Adrenal gland (tissue), 19 donors: ENCODE measurements at regions of chr16 and their contacts with region 1.

Region 1: DNA sequence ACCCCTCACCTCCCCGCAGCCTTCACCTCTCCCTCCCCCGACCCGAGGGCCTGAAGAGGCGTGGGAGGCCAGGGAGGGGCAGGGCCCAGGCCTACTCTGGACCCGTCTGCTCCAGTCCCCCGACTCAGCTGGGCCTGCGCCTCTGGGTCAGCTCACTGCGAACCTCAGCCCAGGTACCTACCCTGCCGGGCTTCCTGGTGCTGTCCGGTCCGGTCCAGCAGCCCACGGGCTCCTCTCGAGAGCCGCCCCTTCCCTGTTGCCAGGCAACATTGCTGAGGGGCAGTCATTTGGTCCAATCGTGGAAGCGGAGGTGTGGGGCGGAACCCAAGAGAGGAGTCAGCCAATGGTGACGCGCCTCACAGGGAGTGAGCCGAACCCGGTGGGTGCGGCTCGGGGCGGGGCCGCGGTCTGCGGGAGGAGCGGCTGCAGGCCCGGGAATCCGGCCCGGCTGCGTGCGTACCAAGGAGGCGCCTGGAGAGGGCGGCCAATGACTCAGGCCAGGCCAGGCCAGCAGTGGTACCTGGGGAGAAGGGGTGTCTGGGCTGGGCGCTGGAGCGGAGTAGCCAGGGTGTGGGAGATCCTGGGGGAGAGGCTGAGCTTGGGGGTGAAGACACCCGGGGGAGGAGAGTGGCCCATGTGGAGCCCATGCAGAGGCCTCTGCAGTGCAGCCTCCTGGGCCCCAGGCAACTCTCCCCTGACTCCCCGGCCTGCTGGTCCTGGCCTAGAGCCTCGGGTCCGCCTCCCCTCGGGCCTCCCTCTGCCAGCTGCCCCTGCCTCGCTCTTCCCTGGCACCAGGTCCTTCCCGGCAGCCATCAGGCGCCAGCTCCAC is at the start of gene MEAK7:
- DNase-seq: peak; percentile 98 to 99 (median 99)
- H3K4me3 ChIP-seq: peak within 1 kb of the TSS; percentile 38 to 82 (median 63)
- H3K27ac ChIP-seq: peak within 1 kb of the TSS in 4 of 5 donors; percentile 44 to 91 (median 68)
- H3K4me1 ChIP-seq: peaks cover 7 to 16% of the 10 kb centered on the region in 2 donors
- H3K27me3 ChIP-seq: no peaks in the 10 kb centered on the region
- CTCF ChIP-seq: peak in 2 of 6 experiments; percentile 4 to 20
- POLR2A ChIP-seq: peak in 1 of 2 donors; percentile 77
- total RNA-seq, gene MEAK7: 3.6 to 14.1 (median 7.6) TPM

Region 2: GRCh38 chr16:84738255-84739038 is 233.8 kb after region 1 on chr16:
- intact Hi-C with region 1: loop called in 1 of 2 experiments (anchors 5 kb)
- DNase-seq: peak; percentile 57 to 92 (median 81)
- H3K4me3 ChIP-seq: no peak overlapping the region
- H3K27ac ChIP-seq: no peak overlapping the region
- H3K4me1 ChIP-seq: peaks cover 0 to 46% of the 10 kb centered on the region in 2 donors
- H3K27me3 ChIP-seq: no peaks in the 10 kb centered on the region
- CTCF ChIP-seq: peak; percentile 77 to 90 (median 86)
- POLR2A ChIP-seq: no peak